Activated CD4-positive, alpha-beta memory T cell treated with anti-CD3 and anti-CD28 coated beads, Interleukin-2, amount 10 ng/mL, durations not matched to agents 7 days and 5 days (primary cell): ENCODE measurements at regions of chr1 and their contacts with region 1.

Region 1: DNA sequence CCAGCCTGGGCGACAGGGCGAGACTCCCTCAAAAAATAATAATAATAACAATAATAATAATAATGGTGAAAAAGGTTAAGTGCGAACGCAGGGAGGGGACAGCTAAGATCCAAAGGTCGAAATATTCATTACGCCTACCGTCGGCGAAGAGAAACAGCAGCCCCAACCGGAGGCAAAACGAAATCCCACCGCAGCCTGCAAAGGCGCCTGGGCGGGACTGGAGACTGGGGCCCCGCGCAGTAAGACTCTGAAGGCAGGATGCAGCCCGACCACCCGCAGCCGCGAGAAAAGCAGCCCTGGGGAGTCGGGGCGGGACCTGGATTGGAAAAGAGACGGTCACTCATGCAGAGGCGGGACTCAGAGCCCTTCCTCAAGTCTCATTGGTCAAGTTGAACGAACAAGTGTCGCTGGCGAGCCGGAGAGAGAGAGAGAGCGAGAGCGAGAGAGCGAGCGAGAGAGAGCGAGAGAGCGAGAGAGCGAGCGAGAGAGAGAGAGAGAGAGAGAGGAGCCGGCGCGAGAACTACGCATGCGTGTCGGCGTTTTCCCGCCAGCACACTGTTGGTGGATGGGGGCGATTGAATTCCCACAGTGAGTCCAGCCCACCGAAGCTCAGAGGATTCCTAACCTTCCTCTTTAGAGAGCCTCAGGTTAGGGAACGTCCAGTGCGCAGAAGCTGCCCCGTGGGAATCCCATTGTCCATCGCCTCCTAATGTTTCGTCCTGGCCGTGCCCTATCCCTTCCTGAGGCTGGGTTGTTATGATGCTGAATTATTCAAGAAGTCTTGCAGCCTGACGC is 10.7 kb downstream of the ENTREP3 start:
- DNase-seq: peak; percentile 99
- H3K4me3 Mint-ChIP-seq: peak overlapping the region; percentile 74
- H3K27ac Mint-ChIP-seq: peak overlapping the region; percentile 88
- H3K4me1 Mint-ChIP-seq: peaks cover 54% of the 10 kb centered on the region
- H3K27me3 Mint-ChIP-seq: peaks cover 2% of the 10 kb centered on the region

Region 2: GRCh38 chr1:155193275-155193990 is 51.1 kb before region 1 on chr1:
- CTCF ChIA-PET with region 1: interaction called, 8 read pairs
- POLR2A ChIA-PET with region 1: interaction called, 20 read pairs
- DNase-seq: peak; percentile 81
- H3K4me3 Mint-ChIP-seq: peak overlapping the region; percentile 76
- H3K27ac Mint-ChIP-seq: peak overlapping the region; percentile 98
- H3K4me1 Mint-ChIP-seq: peaks cover 40% of the 10 kb centered on the region
- H3K27me3 Mint-ChIP-seq: no peaks in the 10 kb centered on the region

Region 3: DNA sequence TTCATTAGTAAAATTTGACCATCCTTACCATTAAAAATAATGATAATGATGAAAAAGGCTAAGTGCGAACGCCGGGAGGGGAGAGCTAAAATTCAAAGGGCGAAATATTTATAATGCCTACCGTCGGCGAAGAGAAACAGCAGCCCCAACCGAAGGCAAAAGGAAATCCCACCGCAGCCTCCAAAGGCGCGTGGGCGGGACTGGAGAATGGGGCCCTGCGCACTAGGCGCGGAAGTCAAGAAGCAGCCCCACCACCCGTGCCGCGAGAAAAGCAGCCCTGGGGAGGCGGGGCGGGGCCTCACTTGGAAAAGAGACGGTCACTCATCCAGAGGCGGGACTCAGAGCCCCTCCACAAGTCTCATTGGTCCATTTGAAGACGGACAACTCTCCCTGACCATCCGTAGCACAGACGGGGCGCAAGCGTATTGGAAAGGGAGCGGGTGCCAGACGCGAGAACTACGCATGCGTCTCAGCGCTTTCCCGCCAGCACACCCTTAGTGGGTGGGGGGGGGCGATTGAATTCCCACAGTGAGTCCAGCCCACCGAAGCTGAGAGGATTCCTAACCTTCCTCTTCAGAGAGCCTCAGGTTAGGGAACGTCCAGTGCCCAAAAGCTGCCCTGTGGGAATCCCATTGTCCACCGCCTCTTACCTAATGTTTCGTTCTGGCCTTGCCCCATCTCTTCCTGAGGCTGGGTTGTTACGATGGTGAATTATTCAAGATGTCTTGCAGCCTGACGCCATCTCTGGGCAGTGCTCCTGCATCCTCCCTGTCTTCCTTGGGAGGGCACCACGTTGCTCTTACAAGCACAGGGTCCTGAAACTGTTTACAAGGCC is 17.1 kb before region 1 on chr1:
- CTCF ChIA-PET with region 1: interaction called, 14 read pairs
- POLR2A ChIA-PET with region 1: interaction called, 41 read pairs
- DNase-seq: peak; percentile 100
- H3K4me3 Mint-ChIP-seq: peak overlapping the region; percentile 81
- H3K27ac Mint-ChIP-seq: peak overlapping the region; percentile 89
- H3K4me1 Mint-ChIP-seq: peaks cover 44% of the 10 kb centered on the region
- H3K27me3 Mint-ChIP-seq: no peaks in the 10 kb centered on the region

Region 4: DNA sequence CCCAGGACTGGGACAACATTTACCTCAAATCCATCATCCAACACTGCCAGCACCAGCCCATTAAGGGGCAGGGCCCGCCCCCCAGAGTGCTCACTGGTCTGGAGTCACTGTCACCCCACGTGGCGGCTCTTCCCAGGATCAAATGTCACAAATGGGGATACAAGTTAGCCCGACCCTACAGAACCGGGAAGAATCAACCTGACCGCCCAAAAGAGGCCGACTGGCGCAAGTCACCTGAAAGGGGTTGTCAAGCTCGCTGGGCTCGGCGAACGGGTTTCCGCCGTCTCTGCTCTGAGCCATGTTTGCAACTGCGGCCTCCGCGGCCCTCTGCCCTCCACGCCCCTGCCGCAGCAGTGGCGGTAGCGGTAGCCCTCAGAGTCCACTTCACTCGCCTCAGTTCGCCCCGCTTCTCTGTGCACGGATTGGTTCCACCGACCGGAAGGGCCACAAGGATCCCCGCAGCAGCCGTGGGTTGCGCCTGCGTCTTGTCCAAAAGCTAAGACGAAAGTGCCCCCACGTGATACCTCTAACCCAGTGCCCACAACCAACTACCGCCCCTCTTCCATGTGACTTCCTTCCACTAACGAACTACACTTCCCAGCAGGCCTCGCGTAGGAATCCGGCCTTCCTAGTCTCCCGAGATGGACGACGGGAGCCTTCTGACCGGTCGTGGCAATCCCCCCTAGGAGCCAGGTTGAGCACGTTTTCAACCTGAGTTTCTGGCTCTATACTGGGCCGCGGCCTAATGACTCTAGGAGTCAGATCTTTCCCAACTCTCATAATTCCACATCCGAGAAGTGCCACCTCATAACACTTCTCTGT is 17.5 kb after region 1 on chr1 and contains the start of gene SCAMP3:
- CTCF ChIA-PET with region 1: interaction called, 91 read pairs
- POLR2A ChIA-PET with region 1: interaction called, 26 read pairs
- DNase-seq: peak; percentile 90
- H3K4me3 Mint-ChIP-seq: peak within 1 kb of the TSS; percentile 98
- H3K27ac Mint-ChIP-seq: peak within 1 kb of the TSS; percentile 91
- H3K4me1 Mint-ChIP-seq: peaks cover 44% of the 10 kb centered on the region
- H3K27me3 Mint-ChIP-seq: no peaks in the 10 kb centered on the region
- total RNA-seq, gene SCAMP3: 87.5 to 91.9 TPM

Region 5: DNA sequence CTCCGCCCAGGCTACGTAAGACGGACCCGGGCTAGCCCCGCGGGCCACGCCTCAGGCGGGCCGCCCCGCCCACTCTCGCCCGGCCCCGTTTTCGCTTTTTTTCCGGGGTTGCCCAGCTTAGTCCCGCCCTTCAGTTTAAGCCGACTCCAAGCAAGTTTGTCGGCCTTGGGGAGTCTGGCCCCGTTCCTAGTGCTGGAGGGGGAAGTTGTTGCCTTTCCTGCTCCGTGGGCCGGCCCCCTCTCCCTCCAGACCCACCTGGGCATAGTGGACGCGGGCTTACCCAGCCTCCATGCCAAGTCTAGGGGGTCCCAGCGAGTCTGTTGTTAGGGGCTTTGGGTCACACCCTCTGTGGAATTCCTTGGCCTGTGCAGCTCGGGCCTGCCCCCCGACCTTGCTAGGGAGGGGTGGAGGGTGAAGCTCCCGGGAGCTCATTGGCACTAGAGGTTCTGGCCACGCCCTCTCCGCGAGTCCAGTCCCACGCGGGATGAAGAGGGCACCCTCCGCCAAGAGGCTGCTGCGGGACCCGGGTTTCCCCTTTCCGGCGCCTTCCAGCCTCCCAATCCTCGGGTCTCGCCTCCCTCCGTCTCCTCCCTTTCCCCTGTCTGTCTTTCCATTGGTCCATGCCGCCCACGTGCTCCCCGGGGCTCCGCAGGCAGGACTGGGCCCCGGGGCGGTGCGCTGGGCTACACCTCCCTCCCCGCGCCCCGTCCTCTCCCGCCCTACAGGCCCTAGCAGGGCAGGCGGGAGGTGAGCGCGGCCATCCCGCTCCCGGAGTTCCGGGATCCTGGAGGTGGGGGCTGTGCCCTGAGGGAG is 79.4 kb after region 1 on chr1:
- CTCF ChIA-PET with region 1: interaction called, 78 read pairs
- POLR2A ChIA-PET with region 1: interaction called, 22 read pairs
- DNase-seq: peak; percentile 92
- H3K4me3 Mint-ChIP-seq: peak overlapping the region; percentile 85
- H3K27ac Mint-ChIP-seq: peak overlapping the region; percentile 78
- H3K4me1 Mint-ChIP-seq: peaks cover 46% of the 10 kb centered on the region
- H3K27me3 Mint-ChIP-seq: no peaks in the 10 kb centered on the region

Region 6: DNA sequence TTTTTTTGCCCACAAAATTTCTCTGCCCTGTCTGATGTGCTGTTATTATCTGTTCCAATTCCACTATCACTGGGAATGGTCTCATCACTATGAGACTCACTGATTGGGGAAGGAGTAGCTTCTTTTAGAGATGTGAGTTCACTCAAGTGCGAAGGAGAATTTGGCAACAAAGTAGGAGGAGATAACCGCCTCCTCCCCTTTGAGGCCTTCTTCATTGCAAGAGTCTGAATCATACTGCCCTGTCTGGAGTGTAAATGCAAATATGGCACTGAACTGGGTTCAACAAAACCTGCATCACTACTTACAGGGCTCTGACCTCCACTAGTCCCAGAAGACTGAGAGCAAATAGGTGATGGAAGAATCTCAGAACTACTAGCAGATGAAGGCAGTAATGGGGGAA is 234.6 kb after region 1 on chr1:
- CTCF ChIA-PET with region 1: no interaction called
- POLR2A ChIA-PET with region 1: no interaction called
- DNase-seq: no peak
- H3K4me3 Mint-ChIP-seq: no peak overlapping the region
- H3K27ac Mint-ChIP-seq: no peak overlapping the region
- H3K4me1 Mint-ChIP-seq: no peaks in the 10 kb centered on the region
- H3K27me3 Mint-ChIP-seq: no peaks in the 10 kb centered on the region